Activated CD4-positive, alpha-beta T cell treated with anti-CD3 and anti-CD28 coated beads, Interleukin-2, amount 10 ng/mL, durations not matched to agents 24 days and 14 days (primary cell): ENCODE measurements at regions of chr20 and their contacts with region 1.

Region 1: DNA sequence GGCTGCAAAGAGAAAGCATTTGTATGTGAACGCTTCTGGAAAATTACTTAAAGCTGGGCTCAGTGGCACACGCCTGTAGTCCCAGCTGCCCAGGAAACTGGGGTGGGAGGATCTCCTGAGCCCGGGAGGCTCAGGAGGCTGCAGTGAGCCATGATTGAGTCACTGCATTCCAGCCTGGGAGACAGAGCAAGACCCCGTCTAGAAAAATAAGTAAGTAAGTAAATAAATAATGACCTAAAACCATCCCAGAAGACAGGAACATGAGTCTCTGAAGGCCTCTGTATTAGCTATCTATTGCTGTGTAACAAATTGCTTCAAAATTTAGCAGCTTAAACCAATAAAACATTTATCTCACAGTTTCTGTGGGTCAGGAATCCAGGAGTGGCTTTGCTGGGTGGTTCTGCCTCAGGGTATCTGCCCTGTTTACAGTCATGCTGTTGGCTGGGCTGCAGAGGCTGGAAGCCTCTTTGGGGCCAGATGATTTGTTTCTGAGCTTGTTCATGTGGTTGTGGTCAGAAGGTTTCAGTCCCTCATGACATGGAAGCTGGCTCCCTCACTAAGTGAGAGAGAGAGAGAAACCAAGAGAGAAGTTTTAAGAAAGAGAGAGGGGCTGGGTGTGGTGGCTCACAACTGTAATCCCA is 48.4 kb upstream of the NCOA3 start:
- DNase-seq: peak; percentile 87
- H3K4me3 Mint-ChIP-seq: peak overlapping the region; percentile 20
- H3K27ac Mint-ChIP-seq: peak overlapping the region; percentile 73
- H3K4me1 Mint-ChIP-seq: peaks cover 41% of the 10 kb centered on the region
- H3K27me3 Mint-ChIP-seq: no peaks in the 10 kb centered on the region

Region 2: DNA sequence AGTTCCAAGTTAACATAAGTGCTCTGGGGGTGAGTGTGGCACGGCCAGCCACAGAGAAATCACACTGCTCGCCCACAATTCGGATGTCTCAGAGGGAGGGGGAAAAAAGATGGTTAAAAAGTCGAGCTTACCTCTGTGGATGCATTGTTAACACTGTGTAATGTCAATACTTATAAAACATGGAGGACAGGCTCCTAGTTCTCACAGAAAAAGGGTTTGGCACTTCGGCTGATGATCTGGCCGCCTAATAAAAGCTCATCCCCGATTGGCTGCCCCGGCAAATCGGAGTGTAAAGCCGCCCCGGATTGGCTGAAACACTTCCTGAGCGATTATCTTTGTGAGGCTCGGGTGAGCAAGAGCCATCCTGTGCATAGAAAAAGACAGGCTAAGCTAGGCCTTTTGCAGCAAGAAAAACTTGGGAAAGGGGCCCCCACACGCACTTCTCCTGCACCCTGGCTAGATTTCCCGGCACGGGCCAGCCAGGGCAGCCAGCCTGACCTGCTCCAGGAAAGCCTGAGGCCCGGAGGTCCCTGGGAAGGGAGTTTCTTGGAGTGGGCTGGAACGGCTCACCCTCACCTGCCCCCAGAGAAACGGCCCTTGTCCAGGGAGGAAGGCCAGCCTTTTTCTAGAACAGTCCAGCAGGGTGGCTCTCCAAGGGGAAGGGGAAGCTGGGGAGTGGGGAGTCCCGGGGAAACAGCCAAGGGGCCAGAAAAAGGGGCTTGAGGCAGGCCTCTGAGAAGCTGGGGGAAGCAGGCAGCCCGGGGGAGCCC is 96.6 kb before region 1 on chr20 and contains the start of gene ZMYND8:
- intact Hi-C with region 1: loop called (anchors 2 kb)
- DNase-seq: peak; percentile 99
- H3K4me3 Mint-ChIP-seq: peak within 1 kb of the TSS; percentile 91
- H3K27ac Mint-ChIP-seq: peak within 1 kb of the TSS; percentile 99
- H3K4me1 Mint-ChIP-seq: peaks cover 30% of the 10 kb centered on the region
- H3K27me3 Mint-ChIP-seq: no peaks in the 10 kb centered on the region
- total RNA-seq, gene ZMYND8: 38.1 and 40.0 TPM in 2 replicates

Region 3: GRCh38 chr20:47418061-47418912 is 35.0 kb before region 1 on chr20:
- intact Hi-C with region 1: loop called (anchors 5 kb)
- DNase-seq: no peak
- H3K4me3 Mint-ChIP-seq: no peak overlapping the region
- H3K27ac Mint-ChIP-seq: no peak overlapping the region
- H3K4me1 Mint-ChIP-seq: peaks cover 21% of the 10 kb centered on the region
- H3K27me3 Mint-ChIP-seq: no peaks in the 10 kb centered on the region

Region 4: GRCh38 chr20:47487175-47487917 is 34.1 kb after region 1 on chr20:
- intact Hi-C with region 1: loop called (anchors 1 kb)
- DNase-seq: peak; percentile 92
- H3K4me3 Mint-ChIP-seq: peak overlapping the region; percentile 72
- H3K27ac Mint-ChIP-seq: peak overlapping the region; percentile 99
- H3K4me1 Mint-ChIP-seq: peaks cover 43% of the 10 kb centered on the region
- H3K27me3 Mint-ChIP-seq: no peaks in the 10 kb centered on the region

Region 5: DNA sequence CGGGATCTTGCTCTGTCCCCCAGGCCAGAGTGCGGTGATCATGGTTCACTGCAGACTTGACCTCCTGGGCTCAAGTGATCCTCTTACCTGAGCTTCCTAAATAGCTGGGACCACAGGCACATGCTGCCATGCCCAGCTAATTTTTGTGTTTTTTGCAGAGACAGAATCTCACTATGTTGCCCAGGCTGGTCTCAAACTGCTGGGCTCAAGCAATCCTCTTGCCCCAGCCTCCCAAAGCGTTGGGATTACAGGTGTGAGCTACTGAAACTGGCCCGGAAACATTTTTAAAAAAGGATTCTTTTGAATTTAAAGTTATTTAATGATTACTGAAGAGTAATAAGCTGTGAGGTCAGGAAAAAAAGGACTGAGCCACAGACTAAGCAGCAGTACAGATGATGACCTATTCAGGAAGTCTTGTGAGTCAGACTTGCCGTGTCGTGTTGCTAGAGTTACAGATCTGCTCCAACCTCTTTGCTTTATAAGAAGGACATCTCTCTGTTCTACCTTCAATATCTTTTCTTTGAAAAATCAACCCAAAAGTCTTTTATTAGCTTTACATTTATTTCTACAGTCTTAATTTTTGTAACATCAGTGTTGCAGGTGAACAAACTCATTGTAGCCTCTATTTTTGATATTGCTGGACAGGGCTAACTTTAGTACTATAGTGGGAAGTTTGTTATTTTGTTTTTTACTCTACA is 157.1 kb after region 1 on chr20:
- intact Hi-C with region 1: loop called (anchors 1 kb)
- DNase-seq: peak; percentile 90
- H3K4me3 Mint-ChIP-seq: peak overlapping the region; percentile 78
- H3K27ac Mint-ChIP-seq: peak overlapping the region; percentile 95
- H3K4me1 Mint-ChIP-seq: peaks cover 68% of the 10 kb centered on the region
- H3K27me3 Mint-ChIP-seq: no peaks in the 10 kb centered on the region